ENCODE measurements at regions of chr11 and their contacts with region 1.

Region 1: DNA sequence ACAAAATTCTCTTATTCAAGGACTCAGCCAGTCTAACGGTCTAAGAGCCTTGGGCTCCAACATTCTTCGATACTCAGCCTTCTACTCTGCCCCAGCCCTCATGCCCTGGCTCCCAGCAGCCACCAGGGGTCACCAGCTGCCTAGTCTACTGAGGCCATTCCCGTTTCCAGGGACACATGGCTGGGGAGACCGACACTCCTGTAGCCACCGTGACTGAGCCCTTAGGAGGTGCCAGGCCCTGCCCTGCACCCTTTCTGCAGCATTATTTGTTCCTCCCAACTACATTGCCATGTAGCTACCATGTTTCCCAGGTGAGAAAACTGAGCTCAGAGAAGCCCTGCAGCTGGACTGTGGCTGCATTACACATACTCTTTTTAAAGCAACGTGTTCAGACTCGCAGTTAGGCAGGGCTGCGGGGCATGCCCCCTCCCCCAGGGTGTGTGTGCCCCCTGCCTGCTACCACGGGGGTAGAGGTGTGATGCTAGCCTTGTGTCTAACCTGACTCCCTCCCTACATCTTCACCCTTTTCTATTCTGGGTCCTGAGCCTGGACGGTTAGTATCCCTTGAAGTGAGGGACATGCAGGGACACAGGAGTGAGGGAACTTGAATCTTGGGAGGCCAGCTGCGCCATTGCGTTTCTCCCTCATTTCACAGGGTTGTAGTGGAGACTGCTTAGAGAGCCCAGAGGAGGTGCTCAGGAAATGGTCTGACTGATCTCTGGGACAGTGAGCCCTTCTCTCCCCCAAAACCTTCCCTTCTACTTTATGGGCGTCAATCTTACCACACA is 17.5 kb downstream of the ATG16L2 start:
- DNase-seq: peak; percentile 77 to 92 (median 89)
- H3K4me3 ChIP-seq: no peak overlapping the region
- H3K27ac ChIP-seq: peak overlapping the region in 51 of 59 donors; percentile 18 to 87 (median 68)
- H3K27me3 ChIP-seq: no peaks in the 10 kb centered on the region
- CTCF ChIP-seq: peak; percentile 60 to 98 (median 95)

Region 2: DNA sequence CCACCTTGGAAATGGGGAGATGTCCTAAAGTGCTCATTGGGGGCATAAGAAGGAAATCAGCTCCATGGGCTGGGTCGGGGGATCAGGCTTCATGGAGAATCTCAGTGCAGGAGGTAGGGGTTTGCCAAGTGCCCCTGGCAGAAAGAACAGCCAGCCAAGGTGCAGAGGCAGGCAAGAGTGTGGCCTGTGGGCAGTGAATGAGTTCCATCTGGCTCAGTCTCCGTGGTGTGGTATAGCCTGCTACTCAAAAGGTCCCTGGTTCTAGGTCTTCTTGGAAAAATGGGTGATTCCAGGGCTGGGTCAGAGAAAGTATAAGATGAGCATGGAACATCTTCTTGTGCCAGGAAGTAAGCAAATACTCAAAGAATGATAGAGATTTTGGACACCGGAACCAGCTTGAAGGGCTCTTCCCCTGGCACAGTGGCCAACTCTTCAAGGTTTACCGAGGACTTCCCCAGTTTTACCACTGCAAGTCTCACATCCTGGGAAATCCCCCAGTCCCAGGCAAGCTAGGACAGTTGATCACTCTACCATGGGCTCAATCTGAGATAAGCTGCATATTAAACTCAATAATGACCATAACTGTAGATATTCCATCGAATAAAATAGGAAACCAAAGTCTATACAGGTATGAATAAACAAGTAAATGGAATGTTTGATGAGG is 68.9 kb before region 1 on chr11:
- intact Hi-C with region 1: no loop called
- DNase-seq: no peak
- H3K4me3 ChIP-seq: no peak overlapping the region
- H3K27ac ChIP-seq: no peak overlapping the region
- H3K27me3 ChIP-seq: no peaks in the 10 kb centered on the region
- CTCF ChIP-seq: no peak

Region 3: GRCh38 chr11:72924568-72925190 is 93.0 kb after region 1 on chr11:
- intact Hi-C with region 1: loop called in 1 of 2 experiments (anchors 5 kb)
- DNase-seq: no peak
- H3K4me3 ChIP-seq: no peak overlapping the region
- H3K27ac ChIP-seq: peak overlapping the region in 3 of 59 donors; percentile 3 to 40 (median 6)
- H3K27me3 ChIP-seq: no peaks in the 10 kb centered on the region
- CTCF ChIP-seq: peak in 54 of 56 donors; percentile 31 to 69 (median 52)

Region 4: DNA sequence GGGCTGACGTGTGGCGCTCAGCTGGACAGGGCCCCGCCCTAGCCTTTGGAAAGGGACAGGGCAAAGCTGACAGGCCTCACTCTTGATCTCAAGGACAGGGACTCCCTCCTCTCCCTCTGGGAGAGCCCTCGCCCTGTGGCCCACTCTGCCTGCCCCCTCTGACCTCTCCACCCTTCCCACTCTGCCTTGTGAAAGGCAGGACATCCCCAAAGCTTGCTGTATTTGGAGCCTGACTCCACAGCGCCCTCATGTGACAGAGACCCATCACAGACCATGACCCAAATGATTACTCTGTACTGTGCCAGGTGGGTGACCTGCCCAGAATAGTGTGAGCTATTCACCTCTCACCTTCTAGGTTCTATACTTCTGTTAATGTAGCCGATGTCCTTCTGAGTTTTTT is 405.1 kb after region 1 on chr11:
- intact Hi-C with region 1: loop called in 1 of 2 experiments (anchors 10 kb)
- DNase-seq: peak in 2 of 10 donors; percentile 13 to 31
- H3K4me3 ChIP-seq: no peak overlapping the region
- H3K27ac ChIP-seq: no peak overlapping the region
- H3K27me3 ChIP-seq: no peaks in the 10 kb centered on the region
- CTCF ChIP-seq: peak in 51 of 56 donors; percentile 9 to 63 (median 44)

Region 5: DNA sequence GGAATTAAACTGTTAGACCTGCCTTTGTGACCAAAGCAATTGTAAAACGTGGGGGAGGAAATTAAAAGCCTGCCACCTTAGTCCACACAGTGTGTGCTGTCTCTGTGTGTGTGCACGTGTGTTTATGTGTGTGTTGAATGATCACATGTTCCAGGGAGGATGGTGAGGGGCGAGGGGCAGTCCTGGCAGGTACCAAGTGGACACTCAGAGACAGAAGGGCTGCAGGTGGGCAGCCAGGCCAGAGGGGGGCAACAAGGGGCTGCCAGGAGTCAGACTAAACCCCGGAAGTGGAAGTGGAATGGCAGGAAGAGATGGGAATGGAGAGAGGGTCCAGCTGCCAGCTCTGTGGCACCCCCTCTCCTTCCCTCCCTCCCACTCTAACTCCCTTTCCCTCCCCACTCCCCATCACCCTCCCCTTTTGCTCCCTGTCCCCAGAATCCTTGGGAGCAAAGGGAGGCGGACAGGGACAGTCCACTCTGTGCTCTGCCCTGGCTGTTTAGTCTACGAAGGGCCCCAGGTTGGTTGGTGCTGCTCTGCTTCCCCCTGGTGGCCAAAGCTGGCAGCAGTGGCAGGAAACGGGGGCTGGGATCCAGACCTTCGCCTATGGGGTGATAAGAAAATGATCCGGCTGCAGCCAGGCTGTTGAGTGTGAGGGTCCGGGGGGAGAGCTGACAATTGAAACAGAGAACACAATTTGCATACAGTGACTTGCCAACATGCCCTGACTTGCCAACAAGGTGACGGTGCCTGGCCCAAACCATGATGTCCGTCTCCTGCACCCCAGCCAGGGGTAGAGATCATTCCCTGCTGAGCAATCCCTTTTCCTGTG is 410.8 kb after region 1 on chr11:
- intact Hi-C with region 1: loop called (anchors 2 to 10 kb)
- DNase-seq: peak in 9 of 10 donors; percentile 41 to 86 (median 74)
- H3K4me3 ChIP-seq: peak overlapping the region in 48 of 59 donors; percentile 13 to 59 (median 40)
- H3K27ac ChIP-seq: peak overlapping the region in 4 of 59 donors; percentile 13 to 55 (median 43)
- H3K27me3 ChIP-seq: no peaks in the 10 kb centered on the region
- CTCF ChIP-seq: peak; percentile 50 to 98 (median 88)

Measured in dorsolateral prefrontal cortex (tissue), 120 donors.